ENCODE measurements at regions of chr18 and their contacts with region 1.

Region 1: DNA sequence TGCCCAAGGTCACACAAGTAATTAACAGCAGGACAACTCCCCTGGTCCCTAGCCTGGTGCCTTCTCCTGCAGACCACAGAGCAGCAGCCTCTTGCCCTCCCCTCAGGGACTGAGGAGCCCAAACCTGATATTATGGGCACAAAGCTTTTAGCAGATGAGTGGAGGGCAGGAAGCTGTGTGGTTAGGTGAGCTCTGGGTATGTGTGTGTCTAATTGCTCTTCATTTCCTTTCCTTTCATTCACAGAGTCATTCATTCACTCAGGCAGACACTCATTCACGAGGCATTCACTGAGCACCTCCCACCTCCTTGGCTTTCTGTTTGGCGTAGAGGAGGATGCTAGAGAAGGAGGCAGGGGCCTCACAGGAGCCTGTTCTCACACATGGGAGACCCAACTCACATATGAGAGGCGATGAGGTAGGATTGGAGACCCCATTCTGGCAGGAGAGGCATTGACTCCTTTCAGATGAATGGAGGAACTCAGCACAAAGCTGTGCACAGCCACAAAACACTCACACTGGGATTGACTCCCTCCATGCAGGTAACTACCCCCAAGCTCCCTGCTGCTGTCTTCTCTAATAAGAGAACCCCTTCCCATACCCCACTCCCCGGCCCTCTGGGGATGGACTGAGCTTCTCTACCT is 306.8 kb upstream of the SKOR2 start:
- DNase-seq: no peak
- ATAC-seq: no peak
- H3K4me3 ChIP-seq: no peak overlapping the region
- H3K27ac ChIP-seq: no peak overlapping the region
- H3K4me1 ChIP-seq: no peaks in the 10 kb centered on the region
- H3K27me3 ChIP-seq: no peaks in the 10 kb centered on the region

Region 2: GRCh38 chr18:47490882-47491281 is 67.3 kb before region 1 on chr18:
- intact Hi-C with region 1: loop called in 1 of 2 experiments (anchors 10 kb)
- DNase-seq: no peak
- ATAC-seq: no peak
- H3K4me3 ChIP-seq: no peak overlapping the region
- H3K27ac ChIP-seq: no peak overlapping the region
- H3K4me1 ChIP-seq: no peaks in the 10 kb centered on the region
- H3K27me3 ChIP-seq: no peaks in the 10 kb centered on the region

Region 3: DNA sequence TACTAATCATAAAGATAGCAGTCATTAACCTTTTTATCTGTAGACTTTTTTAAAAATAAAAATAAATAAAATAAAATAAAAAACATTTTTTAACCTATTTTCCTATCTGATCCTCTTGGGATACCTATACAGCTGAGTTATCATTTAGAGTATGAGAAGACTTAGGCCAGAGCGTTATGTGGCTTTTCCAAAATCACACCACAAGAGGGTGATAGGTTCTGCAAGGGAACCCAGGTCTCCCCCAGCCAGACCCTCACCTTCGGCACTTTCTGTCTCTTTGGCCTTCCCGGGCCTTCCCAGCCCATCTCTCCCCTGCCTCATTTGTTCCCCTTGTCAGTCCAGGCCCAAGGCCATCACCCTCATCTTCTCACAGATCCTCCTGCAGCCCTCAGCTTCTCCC is 60.5 kb after region 1 on chr18:
- intact Hi-C with region 1: no loop called
- DNase-seq: no peak
- ATAC-seq: no peak
- H3K4me3 ChIP-seq: no peak overlapping the region
- H3K27ac ChIP-seq: no peak overlapping the region
- H3K4me1 ChIP-seq: no peaks in the 10 kb centered on the region
- H3K27me3 ChIP-seq: no peaks in the 10 kb centered on the region

Measured in aorta (tissue), 5 donors.